Body of pancreas (tissue), 4 donors: ENCODE measurements at regions of chr12 and their contacts with region 1.

Region 1: DNA sequence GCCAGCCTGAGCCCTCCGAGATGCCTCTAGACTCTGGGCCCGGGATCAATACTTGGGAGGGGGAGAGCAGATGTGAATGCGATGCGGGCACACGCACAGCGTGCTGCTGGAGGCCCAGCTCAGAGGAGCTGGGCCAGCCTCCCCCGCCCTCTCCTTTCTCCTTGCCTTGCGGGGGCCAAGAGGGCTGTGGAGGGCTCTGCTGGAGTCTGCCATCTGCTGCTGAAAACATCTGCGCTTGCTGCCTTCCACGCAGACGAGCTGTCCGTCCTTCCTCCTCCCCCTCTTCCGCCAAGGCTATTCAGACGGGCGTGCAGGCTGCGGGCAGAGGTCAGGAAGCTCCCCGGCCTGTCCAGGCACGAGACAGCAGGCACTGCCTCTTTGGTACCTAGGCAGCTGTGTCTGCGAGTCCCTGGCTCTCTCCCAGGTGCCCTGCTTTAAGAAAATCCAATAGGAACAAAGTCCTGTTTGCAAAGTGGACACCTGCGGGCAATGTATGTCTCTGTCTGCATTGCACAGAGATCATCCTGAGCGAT is 75.2 kb downstream of the SPRING1 start:
- DNase-seq: peak; percentile 30 to 61 (median 40)
- ATAC-seq: no peak
- H3K4me3 ChIP-seq: no peak overlapping the region
- H3K27ac ChIP-seq: peak overlapping the region in 2 of 4 donors; percentile 26 to 54
- H3K4me1 ChIP-seq: peaks cover 30% of the 10 kb centered on the region
- H3K27me3 ChIP-seq: no peaks in the 10 kb centered on the region
- CTCF ChIP-seq: no peak
- POLR2A ChIP-seq: no peak

Region 2: DNA sequence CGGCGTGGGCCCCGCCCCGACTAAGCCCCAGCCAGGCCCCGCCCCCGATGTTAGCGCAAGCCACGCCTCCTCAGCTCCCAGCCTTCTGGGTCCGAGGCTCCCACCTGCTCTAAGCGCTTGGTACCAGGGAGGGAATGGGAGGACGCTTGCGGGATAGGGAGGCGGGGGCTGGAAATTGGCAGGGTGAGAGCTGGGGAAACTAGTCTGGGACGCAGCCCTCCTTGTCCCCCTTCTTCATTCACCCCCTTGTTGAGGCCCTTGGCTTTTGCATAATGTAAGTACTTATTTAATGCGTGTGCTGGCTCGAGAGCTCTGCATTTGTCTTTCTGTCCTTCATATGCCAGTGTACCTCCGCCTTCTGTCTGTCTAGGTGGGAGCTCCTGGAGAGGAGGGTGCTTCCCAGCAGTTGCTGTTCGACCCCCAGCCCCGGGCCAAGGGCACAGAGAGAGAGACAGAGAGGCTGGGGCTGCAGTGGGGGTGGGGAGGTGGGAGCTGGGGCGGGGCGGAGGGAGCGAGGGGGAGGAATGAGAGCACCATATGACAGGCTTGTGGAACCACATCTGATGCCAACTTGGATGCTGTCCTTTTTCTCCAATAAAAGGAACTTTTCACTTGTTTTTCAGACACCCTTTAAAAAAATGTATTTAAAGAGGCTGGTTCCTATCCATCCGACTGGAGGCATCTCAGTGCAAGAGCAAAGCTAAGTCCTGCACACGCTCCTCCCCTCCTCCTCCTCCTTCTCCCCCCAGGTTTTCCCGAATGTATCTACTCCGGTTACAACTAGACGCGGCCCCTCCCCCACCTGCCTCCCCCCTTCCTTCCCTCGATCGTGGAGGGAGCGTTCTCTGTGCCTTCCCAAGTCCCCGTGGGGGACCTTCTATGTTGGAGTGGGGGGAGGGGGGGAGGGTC is 129.1 kb before region 1 on chr12:
- intact Hi-C with region 1: loop called (anchors 10 kb)
- DNase-seq: peak; percentile 72 to 83 (median 76)
- ATAC-seq: peak; percentile 76
- H3K4me3 ChIP-seq: peak overlapping the region; percentile 8 to 46
- H3K27ac ChIP-seq: peak overlapping the region; percentile 46 to 79 (median 72)
- H3K4me1 ChIP-seq: peaks cover 36% of the 10 kb centered on the region
- H3K27me3 ChIP-seq: no peaks in the 10 kb centered on the region
- CTCF ChIP-seq: no peak
- POLR2A ChIP-seq: no peak

Region 3: DNA sequence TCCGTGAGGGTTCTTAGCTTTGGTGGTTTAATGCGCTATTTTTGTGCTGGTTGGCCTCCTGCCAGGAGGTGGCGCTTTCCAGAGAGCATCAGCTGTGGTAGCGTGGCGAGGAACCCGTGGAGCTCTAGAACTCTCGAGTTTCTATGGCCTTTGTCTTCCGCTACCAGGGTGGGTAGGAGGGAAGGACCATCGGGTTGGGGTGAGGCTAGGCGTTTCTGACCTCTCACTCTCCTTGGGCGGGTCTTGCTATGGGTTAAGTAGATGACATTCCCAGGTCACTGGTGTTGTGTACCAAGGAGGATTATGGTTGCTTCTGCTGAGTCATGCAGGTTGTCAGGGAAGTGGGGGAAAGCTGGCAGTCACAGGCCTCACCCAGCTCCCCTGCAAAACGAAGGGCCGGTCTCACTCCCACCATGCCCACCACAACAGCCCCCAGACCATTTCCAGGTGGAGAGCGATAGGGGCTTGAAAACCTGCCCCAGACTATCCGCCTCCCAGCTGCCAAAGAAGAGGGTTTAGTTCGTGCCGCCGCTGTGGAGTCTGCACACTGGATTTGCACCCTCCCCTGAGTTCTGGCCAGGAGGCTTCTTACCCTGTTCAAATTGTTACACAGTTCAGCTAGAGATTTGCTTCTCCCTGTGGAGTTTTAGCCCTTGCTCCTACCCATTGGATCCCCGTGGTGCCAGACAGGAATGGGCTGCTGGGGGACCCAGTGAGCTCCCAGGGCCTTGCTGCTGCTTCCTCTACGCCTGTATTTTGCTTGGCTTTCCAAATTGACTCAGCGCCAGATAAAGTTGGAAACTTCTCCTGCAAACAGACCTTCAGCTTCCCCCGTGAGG is 97.3 kb after region 1 on chr12:
- intact Hi-C with region 1: no loop called
- DNase-seq: peak in 2 of 4 donors; percentile 10 to 15
- ATAC-seq: no peak
- H3K4me3 ChIP-seq: no peak overlapping the region
- H3K27ac ChIP-seq: no peak overlapping the region
- H3K4me1 ChIP-seq: no peaks in the 10 kb centered on the region
- H3K27me3 ChIP-seq: no peaks in the 10 kb centered on the region
- CTCF ChIP-seq: no peak
- POLR2A ChIP-seq: no peak

Region 4: GRCh38 chr12:117047810-117048584 is 385.3 kb after region 1 on chr12:
- intact Hi-C with region 1: no loop called
- DNase-seq: peak; percentile 47 to 81 (median 74)
- ATAC-seq: peak; percentile 52
- H3K4me3 ChIP-seq: no peak overlapping the region
- H3K27ac ChIP-seq: peak overlapping the region in 3 of 4 donors; percentile 34 to 53 (median 34)
- H3K4me1 ChIP-seq: peaks cover 48% of the 10 kb centered on the region
- H3K27me3 ChIP-seq: no peaks in the 10 kb centered on the region
- CTCF ChIP-seq: no peak
- POLR2A ChIP-seq: no peak